ENCODE measurements at regions of chr11 and their contacts with region 1.

Region 1: GRCh38 chr11:85359859-85360258 is 267.3 kb downstream of the DLG2 start:
- DNase-seq: no peak
- ATAC-seq: no peak
- H3K4me3 ChIP-seq: no peak overlapping the region
- H3K27ac ChIP-seq: no peak overlapping the region
- H3K4me1 ChIP-seq: no peaks in the 10 kb centered on the region
- H3K27me3 ChIP-seq: no peaks in the 10 kb centered on the region
- CTCF ChIP-seq: no peak
- POLR2A ChIP-seq: no peak
- RAD21 ChIP-seq: no peak

Region 2: GRCh38 chr11:85236211-85236610 is 123.6 kb before region 1 on chr11:
- CTCF ChIA-PET with region 1: no interaction called
- POLR2A ChIA-PET with region 1: no interaction called
- dilution Hi-C with region 1: no loop called
- in situ Hi-C with region 1: no loop called
- intact Hi-C with region 1: loop called (anchors 5 kb)
- DNase-seq: no peak
- ATAC-seq: no peak
- H3K4me3 ChIP-seq: no peak overlapping the region
- H3K27ac ChIP-seq: no peak overlapping the region
- H3K4me1 ChIP-seq: no peaks in the 10 kb centered on the region
- H3K27me3 ChIP-seq: no peaks in the 10 kb centered on the region
- CTCF ChIP-seq: no peak
- POLR2A ChIP-seq: no peak
- RAD21 ChIP-seq: no peak

Region 3: DNA sequence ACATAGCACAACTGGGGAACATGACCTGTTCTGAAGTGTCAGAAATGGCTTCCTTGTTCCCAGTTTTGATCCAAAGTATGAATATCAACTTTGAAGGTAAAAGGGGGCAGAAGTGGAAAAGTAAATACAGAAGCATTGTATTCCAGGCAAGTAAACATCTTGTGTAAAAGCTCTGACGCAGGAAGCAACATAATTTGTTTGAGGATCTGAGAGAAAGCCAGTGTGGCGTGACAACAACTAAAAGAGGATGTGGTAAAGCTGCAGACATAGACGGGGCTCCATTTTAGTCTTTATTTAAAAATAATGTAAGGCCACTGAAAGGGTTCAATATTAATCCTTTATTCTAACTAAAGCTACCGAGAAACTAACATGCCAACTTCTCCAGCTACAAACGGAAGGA is 42.9 kb before region 1 on chr11:
- CTCF ChIA-PET with region 1: no interaction called
- POLR2A ChIA-PET with region 1: no interaction called
- dilution Hi-C with region 1: no loop called
- in situ Hi-C with region 1: no loop called
- intact Hi-C with region 1: no loop called
- DNase-seq: no peak
- ATAC-seq: no peak
- H3K4me3 ChIP-seq: no peak overlapping the region
- H3K27ac ChIP-seq: no peak overlapping the region
- H3K4me1 ChIP-seq: no peaks in the 10 kb centered on the region
- H3K27me3 ChIP-seq: no peaks in the 10 kb centered on the region
- CTCF ChIP-seq: no peak
- POLR2A ChIP-seq: no peak
- RAD21 ChIP-seq: no peak

Region 4: GRCh38 chr11:85530634-85531033 is 170.8 kb after region 1 on chr11:
- CTCF ChIA-PET with region 1: no interaction called
- POLR2A ChIA-PET with region 1: no interaction called
- dilution Hi-C with region 1: no loop called
- in situ Hi-C with region 1: no loop called
- intact Hi-C with region 1: no loop called
- DNase-seq: no peak
- ATAC-seq: no peak
- H3K4me3 ChIP-seq: no peak overlapping the region
- H3K27ac ChIP-seq: no peak overlapping the region
- H3K4me1 ChIP-seq: no peaks in the 10 kb centered on the region
- H3K27me3 ChIP-seq: no peaks in the 10 kb centered on the region
- CTCF ChIP-seq: no peak
- POLR2A ChIP-seq: no peak
- RAD21 ChIP-seq: no peak

Measured in IMR-90 (cell line).